ENCODE measurements at regions of chr3 and their contacts with region 1.

Region 1: GRCh38 chr3:48507351-48508061 is 3.5 kb upstream of the SHISA5 start:
- DNase-seq: peak; percentile 64 to 89 (median 74)
- ATAC-seq: peak; percentile 89
- H3K4me3 ChIP-seq: no peak overlapping the region
- H3K4me3 Mint-ChIP-seq: peak overlapping the region; percentile 59
- H3K27ac ChIP-seq: peak overlapping the region in 1 of 2 donors; percentile 45
- H3K27ac Mint-ChIP-seq: peak overlapping the region; percentile 74
- H3K4me1 ChIP-seq: peaks cover 64% of the 10 kb centered on the region
- H3K4me1 Mint-ChIP-seq: peaks cover 61% of the 10 kb centered on the region
- H3K27me3 ChIP-seq: no peaks in the 10 kb centered on the region
- H3K27me3 Mint-ChIP-seq: no peaks in the 10 kb centered on the region
- CTCF ChIP-seq: peak; percentile 86

Region 2: GRCh38 chr3:48232734-48233133 is 274.8 kb before region 1 on chr3:
- CTCF ChIA-PET with region 1: no interaction called
- POLR2A ChIA-PET with region 1: no interaction called
- intact Hi-C with region 1: loop called in 1 of 2 experiments (anchors 5 kb)
- DNase-seq: peak; percentile 19 to 69 (median 41)
- ATAC-seq: peak; percentile 88
- H3K4me3 ChIP-seq: no peak overlapping the region
- H3K4me3 Mint-ChIP-seq: no peak overlapping the region
- H3K27ac ChIP-seq: no peak overlapping the region
- H3K27ac Mint-ChIP-seq: no peak overlapping the region
- H3K4me1 ChIP-seq: peaks cover 4% of the 10 kb centered on the region
- H3K4me1 Mint-ChIP-seq: no peaks in the 10 kb centered on the region
- H3K27me3 ChIP-seq: no peaks in the 10 kb centered on the region
- H3K27me3 Mint-ChIP-seq: no peaks in the 10 kb centered on the region
- CTCF ChIP-seq: peak; percentile 64

Region 3: DNA sequence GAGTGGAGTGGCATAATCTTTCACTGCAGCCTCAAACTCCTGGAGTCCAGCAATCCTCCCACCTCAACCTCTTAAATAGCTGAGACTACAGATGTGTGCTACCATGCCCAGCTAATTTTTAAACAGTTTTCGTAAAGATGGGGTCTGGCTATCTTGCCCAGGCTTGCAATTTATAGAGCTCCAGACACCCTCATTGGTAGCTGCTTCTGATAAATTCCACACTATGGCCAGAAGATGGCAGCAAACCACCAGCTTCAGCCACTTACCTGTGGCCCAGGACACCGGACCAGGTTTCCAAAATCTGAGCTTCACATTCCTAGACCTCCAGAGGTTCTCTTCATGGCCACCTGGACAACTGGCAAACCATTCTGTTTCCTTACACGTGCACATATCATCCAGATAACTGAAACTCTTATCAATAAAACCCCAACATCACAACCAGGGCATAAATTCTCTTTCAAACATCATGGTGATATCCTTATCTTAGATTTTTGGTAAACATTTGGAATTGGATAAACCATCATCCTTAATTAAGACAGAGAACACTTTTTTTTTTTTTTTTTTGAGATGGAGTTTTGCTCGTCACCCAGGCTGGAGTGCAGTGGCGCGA is 106.6 kb before region 1 on chr3:
- CTCF ChIA-PET with region 1: interaction called, 8 read pairs
- POLR2A ChIA-PET with region 1: interaction called, 5 read pairs
- intact Hi-C with region 1: loop called (anchors 1 kb)
- DNase-seq: peak; percentile 45 to 88 (median 56)
- ATAC-seq: peak; percentile 82
- H3K4me3 ChIP-seq: no peak overlapping the region
- H3K4me3 Mint-ChIP-seq: no peak overlapping the region
- H3K27ac ChIP-seq: no peak overlapping the region
- H3K27ac Mint-ChIP-seq: no peak overlapping the region
- H3K4me1 ChIP-seq: no peaks in the 10 kb centered on the region
- H3K4me1 Mint-ChIP-seq: no peaks in the 10 kb centered on the region
- H3K27me3 ChIP-seq: no peaks in the 10 kb centered on the region
- H3K27me3 Mint-ChIP-seq: peaks cover 1% of the 10 kb centered on the region
- CTCF ChIP-seq: peak; percentile 93

Region 4: DNA sequence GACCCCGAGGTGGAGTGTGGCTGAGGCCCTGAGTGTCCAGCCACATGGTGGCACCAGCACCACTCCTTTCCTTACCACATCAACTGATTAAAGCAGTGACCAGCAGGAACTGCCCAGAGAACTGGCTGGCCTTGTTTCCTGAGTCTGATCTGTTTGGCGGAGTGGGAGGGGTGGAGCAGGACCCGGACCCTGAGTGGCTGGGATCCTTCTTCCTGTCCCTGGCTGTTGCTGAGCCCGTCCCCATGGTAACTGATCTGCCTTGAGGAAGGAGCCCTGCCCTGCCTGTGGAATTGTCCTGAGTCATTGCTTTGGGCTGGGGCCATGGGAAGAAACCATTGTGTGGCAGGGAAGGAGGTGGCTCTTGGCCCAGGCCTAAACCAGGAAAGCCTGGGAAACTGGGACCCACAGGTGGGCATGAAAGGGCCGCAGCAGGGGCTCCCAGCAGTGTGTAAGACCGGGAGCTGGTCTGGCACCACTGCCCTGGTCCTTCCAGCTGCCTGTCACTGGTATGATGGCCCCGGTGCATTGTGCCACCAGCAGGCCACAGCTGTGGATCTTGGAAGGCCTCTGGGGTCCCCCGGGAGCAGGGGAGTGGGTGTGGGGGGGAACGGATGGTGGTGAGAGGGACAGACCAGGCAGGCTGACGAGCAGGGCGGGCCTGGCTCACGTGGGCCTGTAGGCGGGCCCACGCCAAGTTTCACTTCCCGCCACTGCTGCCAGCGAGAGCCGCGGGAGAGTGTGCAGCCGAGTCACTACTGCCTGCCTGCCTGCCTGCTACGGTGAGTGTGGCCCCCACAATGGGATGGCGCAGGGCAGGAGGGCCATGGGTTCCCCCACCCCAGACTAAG is 41.8 kb before region 1 on chr3:
- CTCF ChIA-PET with region 1: interaction called, 5 read pairs
- POLR2A ChIA-PET with region 1: interaction called, 13 read pairs
- intact Hi-C with region 1: loop called (anchors 1 to 2 kb)
- DNase-seq: peak; percentile 62 to 89 (median 76)
- ATAC-seq: peak; percentile 96
- H3K4me3 ChIP-seq: peak overlapping the region; percentile 72
- H3K4me3 Mint-ChIP-seq: peak overlapping the region; percentile 87
- H3K27ac ChIP-seq: peak overlapping the region; percentile 94
- H3K27ac Mint-ChIP-seq: peak overlapping the region; percentile 94
- H3K4me1 ChIP-seq: peaks cover 66% of the 10 kb centered on the region
- H3K4me1 Mint-ChIP-seq: peaks cover 53% of the 10 kb centered on the region
- H3K27me3 ChIP-seq: no peaks in the 10 kb centered on the region
- H3K27me3 Mint-ChIP-seq: no peaks in the 10 kb centered on the region
- CTCF ChIP-seq: no peak

Region 5: GRCh38 chr3:48478596-48479555 is 28.6 kb before region 1 on chr3:
- CTCF ChIA-PET with region 1: interaction called, 11 read pairs
- POLR2A ChIA-PET with region 1: interaction called, 15 read pairs
- intact Hi-C with region 1: no loop called
- DNase-seq: peak; percentile 38 to 87 (median 59)
- ATAC-seq: peak; percentile 85
- H3K4me3 ChIP-seq: peak overlapping the region; percentile 47
- H3K4me3 Mint-ChIP-seq: peak overlapping the region; percentile 89
- H3K27ac ChIP-seq: peak overlapping the region; percentile 67 to 75
- H3K27ac Mint-ChIP-seq: peak overlapping the region; percentile 95
- H3K4me1 ChIP-seq: peaks cover 61% of the 10 kb centered on the region
- H3K4me1 Mint-ChIP-seq: peaks cover 36% of the 10 kb centered on the region
- H3K27me3 ChIP-seq: no peaks in the 10 kb centered on the region
- H3K27me3 Mint-ChIP-seq: no peaks in the 10 kb centered on the region
- CTCF ChIP-seq: no peak

Region 6: GRCh38 chr3:48623851-48624547 is 116.5 kb after region 1 on chr3:
- CTCF ChIA-PET with region 1: no interaction called
- POLR2A ChIA-PET with region 1: no interaction called
- intact Hi-C with region 1: no loop called
- DNase-seq: no peak
- ATAC-seq: no peak
- H3K4me3 ChIP-seq: no peak overlapping the region
- H3K4me3 Mint-ChIP-seq: no peak overlapping the region
- H3K27ac ChIP-seq: no peak overlapping the region
- H3K27ac Mint-ChIP-seq: no peak overlapping the region
- H3K4me1 ChIP-seq: peaks cover 8% of the 10 kb centered on the region
- H3K4me1 Mint-ChIP-seq: peaks cover 4% of the 10 kb centered on the region
- H3K27me3 ChIP-seq: no peaks in the 10 kb centered on the region
- H3K27me3 Mint-ChIP-seq: no peaks in the 10 kb centered on the region
- CTCF ChIP-seq: no peak